Spleen (tissue), 13 donors: ENCODE measurements at regions of chr22 and their contacts with region 1.

Region 1: DNA sequence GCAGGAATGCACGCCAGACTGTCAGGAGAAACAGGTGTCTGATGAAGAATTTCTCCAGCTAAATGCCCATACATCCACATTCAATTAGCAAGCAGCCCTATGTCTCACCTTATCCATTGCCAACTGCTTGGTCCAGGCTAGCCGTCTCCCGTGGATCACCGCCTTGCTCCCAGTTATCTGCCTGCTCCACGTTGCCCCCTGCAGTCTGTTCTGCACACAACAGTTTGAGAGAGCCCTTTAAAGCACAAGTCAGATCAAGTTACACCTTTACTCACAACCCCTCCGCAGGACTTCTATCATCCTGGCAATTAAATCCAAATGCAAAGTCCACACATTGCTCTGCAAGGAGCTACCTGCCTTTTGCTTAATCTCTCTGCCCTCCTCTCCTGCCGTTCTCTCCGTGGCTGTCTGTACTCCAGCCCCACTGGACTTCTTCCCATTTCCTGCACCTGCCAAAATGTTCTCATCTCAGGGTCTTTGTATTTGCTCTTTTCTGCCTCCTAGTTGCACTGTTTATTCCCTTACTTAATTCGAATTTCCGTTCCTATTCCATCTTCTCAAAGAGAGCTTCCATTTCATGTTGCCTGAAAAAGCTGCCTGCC is 185.3 kb upstream of the LARGE1 start:
- DNase-seq: no peak
- H3K4me3 ChIP-seq: no peak overlapping the region
- H3K27ac ChIP-seq: no peak overlapping the region
- H3K4me1 ChIP-seq: no peaks in the 10 kb centered on the region
- H3K27me3 ChIP-seq: peaks cover 0 to 23% (median 0%) of the 10 kb centered on the region in 7 donors
- CTCF ChIP-seq: peak in 10 of 11 experiments; percentile 20 to 69 (median 48)
- POLR2A ChIP-seq: no peak

Region 2: GRCh38 chr22:33529424-33530113 is 576.0 kb before region 1 on chr22:
- intact Hi-C with region 1: loop called (anchors 10 kb)
- DNase-seq: no peak
- H3K4me3 ChIP-seq: no peak overlapping the region
- H3K27ac ChIP-seq: no peak overlapping the region
- H3K4me1 ChIP-seq: peaks cover 0 to 4% (median 0%) of the 10 kb centered on the region in 6 donors
- H3K27me3 ChIP-seq: no peaks in the 10 kb centered on the region
- CTCF ChIP-seq: no peak
- POLR2A ChIP-seq: no peak